Lower leg skin (tissue), 4 donors: ENCODE measurements at regions of chr11 and their contacts with region 1.

Region 1: GRCh38 chr11:115716601-115717529 is 212.7 kb upstream of the CADM1 start:
- DNase-seq: no peak
- H3K4me3 ChIP-seq: no peak overlapping the region
- CTCF ChIP-seq: no peak
- POLR2A ChIP-seq: no peak

Region 2: GRCh38 chr11:115817844-115818468 is 101.1 kb after region 1 on chr11:
- intact Hi-C with region 1: loop called (anchors 10 kb)
- DNase-seq: no peak
- H3K4me3 ChIP-seq: no peak overlapping the region
- CTCF ChIP-seq: no peak
- POLR2A ChIP-seq: no peak